Tibial artery (tissue), 4 donors: ENCODE measurements at regions of chr2 and their contacts with region 1.

Region 1: DNA sequence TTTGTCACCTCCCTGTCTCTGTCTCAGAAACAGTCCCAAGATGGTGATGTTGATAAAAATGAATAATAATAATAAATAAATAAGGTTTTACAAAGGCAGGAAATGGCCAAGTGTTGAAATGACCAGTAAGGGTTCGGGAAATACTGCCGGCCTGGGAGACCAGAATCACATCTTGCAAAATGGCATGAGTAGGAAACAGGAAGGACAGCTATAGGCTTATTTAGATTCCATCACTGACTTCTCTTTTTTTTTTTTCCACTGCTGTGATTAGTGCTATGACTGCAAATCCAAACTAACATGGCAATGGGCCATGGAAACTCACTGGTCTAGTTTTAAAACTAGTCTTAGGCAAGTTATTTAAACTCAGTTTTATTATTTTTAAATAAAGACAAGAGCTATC is 60.6 kb downstream of the SCN1A start:
- DNase-seq: no peak
- H3K4me3 ChIP-seq: no peak overlapping the region
- H3K27ac ChIP-seq: no peak overlapping the region
- H3K4me1 ChIP-seq: no peaks in the 10 kb centered on the region
- H3K27me3 ChIP-seq: no peaks in the 10 kb centered on the region
- CTCF ChIP-seq: no peak

Region 2: GRCh38 chr2:166375736-166376487 is 308.7 kb after region 1 on chr2 and contains the start of gene SCN9A:
- intact Hi-C with region 1: loop called (anchors 10 kb)
- DNase-seq: peak; percentile 66 to 79
- H3K4me3 ChIP-seq: peak within 1 kb of the TSS; percentile 53 to 65
- H3K27ac ChIP-seq: peak within 1 kb of the TSS; percentile 50 to 62
- H3K4me1 ChIP-seq: peaks cover 0 to 12% (median 8%) of the 10 kb centered on the region in 4 donors
- H3K27me3 ChIP-seq: no peaks in the 10 kb centered on the region
- CTCF ChIP-seq: no peak